IMR-90 (cell line): ENCODE measurements at regions of chr1 and their contacts with region 1.

Region 1: DNA sequence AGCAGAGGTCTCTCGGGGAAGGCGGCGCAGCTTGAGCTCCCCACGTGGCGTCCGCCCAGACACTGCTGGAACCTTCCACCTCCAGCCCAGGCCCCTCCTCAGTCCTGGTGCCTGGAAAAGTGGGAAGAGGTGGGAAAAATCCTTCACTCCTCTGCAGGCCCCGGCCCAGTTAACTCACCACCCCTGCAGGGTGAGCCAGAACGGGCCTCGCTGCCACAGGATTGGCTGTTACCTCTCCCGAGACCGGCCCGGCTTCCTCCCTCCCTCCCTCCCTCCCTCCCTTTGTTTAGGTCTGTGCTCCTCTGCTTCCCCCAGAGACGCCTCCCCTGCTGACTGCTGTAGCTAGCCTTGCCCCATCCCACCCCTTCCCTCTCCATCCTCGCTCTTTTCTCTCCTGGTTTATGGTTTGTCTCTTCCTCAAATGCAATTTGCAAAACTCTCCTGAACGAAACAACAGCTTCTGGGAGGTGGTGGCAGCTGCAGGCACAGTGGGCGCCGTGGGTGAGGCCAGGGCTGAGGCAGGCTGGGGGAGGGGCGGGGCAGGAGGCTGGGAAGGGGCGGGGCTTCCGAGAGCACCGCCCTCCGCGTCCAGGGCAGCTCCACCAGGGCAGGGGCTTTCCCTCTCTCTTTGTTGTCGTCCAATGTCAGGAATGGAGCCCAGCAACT is 6.5 kb downstream of the CAPN9 start:
- DNase-seq: no peak
- ATAC-seq: peak; percentile 51
- H3K4me3 ChIP-seq: no peak overlapping the region
- H3K27ac ChIP-seq: peak overlapping the region; percentile 35; the same call in 1 of the 2 replicates
- H3K4me1 ChIP-seq: peaks cover 5% of the 10 kb centered on the region; the same call in 1 of the 2 replicates
- H3K27me3 ChIP-seq: peaks cover 7% of the 10 kb centered on the region
- CTCF ChIP-seq: no peak
- POLR2A ChIP-seq: no peak
- RAD21 ChIP-seq: no peak

Region 2: DNA sequence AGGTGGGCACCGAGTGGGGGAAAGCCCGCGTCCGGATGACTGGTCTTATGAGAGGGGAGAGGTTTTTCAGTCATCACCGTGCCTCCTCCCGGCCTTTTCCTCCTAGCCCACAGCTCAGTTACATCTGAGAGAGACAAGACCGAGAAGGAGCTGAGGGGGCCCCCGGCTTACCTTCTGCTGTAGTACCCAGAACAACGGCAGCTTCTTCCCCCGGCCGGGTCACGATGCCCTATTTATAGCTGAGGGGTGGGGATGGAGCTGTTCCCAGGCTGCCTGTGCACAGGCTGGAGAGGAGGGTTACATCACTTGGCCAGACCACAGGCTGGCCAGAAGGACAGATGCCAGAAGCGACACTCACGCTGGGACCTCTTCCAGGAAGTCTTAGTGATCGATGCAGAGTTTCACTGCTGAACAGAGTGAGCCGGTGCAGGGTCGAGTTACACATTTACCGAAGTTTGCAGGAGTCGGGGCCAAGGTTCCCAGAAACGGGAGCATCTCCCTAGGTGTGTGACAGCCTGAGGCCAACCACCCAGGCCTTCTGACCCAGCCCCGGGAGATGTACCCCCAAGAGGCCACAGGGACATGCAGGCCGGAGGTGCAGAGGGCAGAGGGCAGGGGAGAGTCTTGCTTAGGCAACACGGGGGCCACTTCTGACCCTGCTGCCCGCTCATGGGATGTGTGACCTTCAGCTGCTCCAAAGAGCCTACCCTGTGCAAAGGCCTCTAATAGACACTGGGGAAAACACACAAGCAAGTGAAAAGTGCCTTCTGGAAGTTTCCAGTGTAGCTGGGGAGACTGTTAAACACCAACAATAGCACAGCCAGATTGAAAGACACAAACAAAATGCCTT is 39.6 kb before region 1 on chr1 and contains the start of gene AGT:
- CTCF ChIA-PET with region 1: no interaction called
- POLR2A ChIA-PET with region 1: no interaction called
- dilution Hi-C with region 1: no loop called
- in situ Hi-C with region 1: no loop called
- intact Hi-C with region 1: loop called (anchors 5 kb)
- DNase-seq: peak; percentile 92
- ATAC-seq: peak; percentile 86
- H3K4me3 ChIP-seq: no peak within 1 kb of the TSS
- H3K27ac ChIP-seq: peak within 1 kb of the TSS; percentile 6; the same call in 1 of the 2 replicates
- H3K4me1 ChIP-seq: peaks cover 11% of the 10 kb centered on the region
- H3K27me3 ChIP-seq: 0 out of 2 replicates have a peak, but pooled peaks cover 2% of the 10 kb centered on the region
- CTCF ChIP-seq: no peak
- POLR2A ChIP-seq: no peak
- RAD21 ChIP-seq: no peak
- total RNA-seq, gene AGT: under 0.01 and 0.18 TPM in 2 replicates